ENCODE measurements at regions of chr2 and their contacts with region 1.

Region 1: DNA sequence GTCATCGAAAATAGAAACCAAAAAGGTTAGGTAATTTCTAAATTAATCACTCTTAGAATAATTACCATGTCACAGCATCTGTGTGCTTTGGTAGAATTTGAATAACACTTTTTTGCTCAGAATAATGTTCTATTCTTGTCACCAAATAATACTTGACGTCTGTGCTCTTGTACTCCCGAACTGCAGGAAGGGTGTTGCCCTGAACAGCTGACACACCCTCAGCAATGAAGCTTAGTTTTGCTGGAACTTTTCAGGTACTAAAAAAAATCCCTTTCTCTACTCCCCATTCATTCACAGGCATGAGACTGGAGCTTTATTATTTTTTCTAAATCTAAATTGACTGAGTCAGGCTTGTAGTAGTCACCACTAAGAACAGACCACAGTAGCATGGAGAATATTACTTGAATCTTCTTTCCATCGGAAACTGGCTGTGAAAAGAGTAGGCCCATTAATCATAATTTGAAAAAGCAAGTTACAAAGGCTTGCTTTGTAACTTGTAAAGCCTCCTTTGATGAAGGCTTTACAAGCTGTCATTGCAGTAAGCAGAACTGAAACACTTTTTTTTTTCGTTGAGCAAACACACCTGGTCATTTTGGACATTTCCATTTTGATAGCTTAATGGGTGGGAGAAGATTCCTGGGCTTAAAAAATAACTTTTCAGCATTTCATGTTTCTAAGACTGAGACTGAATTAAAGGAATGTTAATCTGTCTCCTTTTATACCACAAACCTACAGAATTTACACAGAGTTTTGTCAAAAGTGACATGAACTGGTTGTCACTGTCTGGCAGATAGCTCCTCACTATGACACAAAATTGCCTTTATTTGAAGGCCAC is 70.3 kb upstream of the PELI1 start:
- DNase-seq: peak; percentile 53
- CTCF ChIP-seq: no peak

Region 2: DNA sequence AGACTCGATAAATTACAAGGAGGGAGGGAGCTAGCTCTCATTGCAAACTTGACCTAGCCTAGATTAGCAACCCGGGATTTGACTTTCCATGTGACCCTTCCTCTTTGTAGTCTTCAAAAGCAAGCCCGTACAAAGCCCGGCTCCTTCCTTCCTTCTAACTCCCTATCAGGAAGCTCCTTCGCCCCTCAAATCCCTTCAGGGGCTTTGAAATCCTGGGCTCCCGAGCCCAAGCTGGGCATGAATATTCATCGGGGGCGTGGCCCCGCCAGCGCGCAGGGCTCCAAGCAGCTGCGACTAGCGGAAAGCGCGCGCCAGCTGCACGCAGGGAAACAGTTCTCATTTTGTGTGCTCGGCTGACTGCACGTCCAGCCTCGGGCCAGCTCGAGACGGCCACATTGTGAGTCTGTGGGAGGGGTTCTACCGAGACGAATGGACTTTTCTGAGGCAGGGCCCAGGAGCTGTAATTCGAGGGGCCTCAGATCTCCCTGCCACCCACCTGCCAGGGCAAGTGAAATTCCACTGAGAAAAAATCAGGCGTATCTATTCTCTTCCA is 13.7 kb after region 1 on chr2:
- CTCF ChIA-PET with region 1: interaction called, 12 read pairs
- POLR2A ChIA-PET with region 1: interaction called, 11 read pairs
- DNase-seq: peak; percentile 85
- CTCF ChIP-seq: no peak

Measured in GM10248 (cell line).